Activated CD4-positive, alpha-beta T cell treated with anti-CD3 and anti-CD28 coated beads for 36 hours (primary cell): ENCODE measurements at regions of chr20 and their contacts with region 1.

Region 1: GRCh38 chr20:62861726-62862336 is at the start of gene TCFL5:
- DNase-seq: peak; percentile 97
- ATAC-seq: peak; percentile 92
- H3K4me3 Mint-ChIP-seq: peak within 1 kb of the TSS; percentile 66
- H3K27ac Mint-ChIP-seq: peak within 1 kb of the TSS; percentile 42
- H3K4me1 Mint-ChIP-seq: peaks cover 28% of the 10 kb centered on the region
- H3K27me3 Mint-ChIP-seq: no peaks in the 10 kb centered on the region
- total RNA-seq, gene TCFL5: 5.2 to 6.6 TPM

Region 2: DNA sequence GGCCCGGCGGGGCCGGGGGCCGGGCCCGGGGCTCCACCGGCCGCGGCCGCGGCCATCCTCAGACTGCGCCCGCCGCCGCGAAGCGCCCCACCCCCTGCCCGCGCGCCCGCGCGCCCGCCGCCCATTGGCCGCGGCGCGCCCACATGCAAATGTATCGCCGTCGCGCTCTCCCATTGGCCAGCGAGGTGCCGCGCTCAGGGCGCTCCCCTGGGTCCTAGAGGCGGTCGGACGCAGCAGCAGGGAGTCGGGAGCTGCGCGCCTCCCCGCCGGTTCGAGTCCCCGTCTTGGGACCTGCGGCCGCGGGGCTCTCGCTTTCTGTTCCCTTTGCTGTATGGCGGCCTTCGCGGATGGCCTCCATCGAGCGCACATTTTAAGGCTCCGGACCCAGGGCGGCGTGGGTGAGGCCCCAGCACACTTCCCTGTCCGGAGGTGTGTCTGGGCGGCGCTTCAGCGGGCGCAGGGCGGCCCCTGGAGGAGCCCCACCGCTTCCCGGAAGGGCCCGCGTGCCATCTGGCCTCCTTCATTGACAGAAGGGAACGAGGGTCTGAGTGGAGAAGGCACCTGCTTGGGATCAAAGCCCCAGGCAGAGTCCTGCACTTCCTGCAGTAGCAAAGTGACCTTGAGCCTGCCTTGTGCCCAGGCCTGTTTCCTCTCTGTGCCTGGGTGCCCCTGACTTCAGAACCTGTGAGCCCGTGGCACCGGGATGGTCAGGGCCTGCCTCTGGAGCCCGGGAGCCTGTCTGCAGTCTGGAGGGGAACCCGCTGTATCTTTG is 454.4 kb before region 1 on chr20 and contains the start of gene CABLES2:
- CTCF ChIA-PET with region 1: no interaction called
- POLR2A ChIA-PET with region 1: no interaction called
- intact Hi-C with region 1: loop called in 1 of 2 experiments (anchors 1 kb)
- DNase-seq: peak; percentile 96
- ATAC-seq: peak; percentile 93
- H3K4me3 Mint-ChIP-seq: peak within 1 kb of the TSS; percentile 72
- H3K27ac Mint-ChIP-seq: peak within 1 kb of the TSS; percentile 82
- H3K4me1 Mint-ChIP-seq: peaks cover 23% of the 10 kb centered on the region
- H3K27me3 Mint-ChIP-seq: peaks cover 2% of the 10 kb centered on the region
- total RNA-seq, gene CABLES2: 6.4 to 7.6 TPM

Region 3: DNA sequence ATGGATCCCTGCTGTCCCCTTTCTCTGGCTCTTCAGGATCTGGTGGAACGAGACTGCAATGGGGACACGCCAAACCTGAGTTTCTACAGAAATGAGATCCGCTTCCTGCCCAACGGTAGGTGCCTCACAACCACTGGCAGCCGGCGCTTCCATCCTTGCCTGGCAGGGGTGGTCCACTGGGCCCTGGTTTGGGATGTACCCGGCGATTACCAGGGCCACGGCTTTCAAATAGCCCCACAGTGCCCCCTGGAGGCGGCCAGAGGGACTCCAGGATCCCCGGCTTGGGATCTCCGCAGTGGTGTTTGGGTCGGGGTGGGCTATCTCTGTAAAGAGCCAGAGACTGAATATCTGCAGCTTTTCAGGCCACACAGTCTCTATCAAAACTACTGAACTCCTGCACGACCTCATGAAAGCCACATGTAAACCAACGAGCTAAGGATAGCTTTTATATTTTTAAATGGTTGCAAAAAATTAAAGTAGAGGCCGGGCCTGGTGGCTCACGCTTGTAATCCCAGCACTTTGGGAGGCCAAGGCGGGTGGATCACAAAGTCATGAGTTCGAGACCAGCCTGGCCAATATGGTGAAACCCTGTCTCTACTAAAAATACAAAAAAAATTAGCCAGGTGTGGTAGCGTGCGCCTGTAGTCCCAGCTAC is 53.5 kb before region 1 on chr20:
- CTCF ChIA-PET with region 1: no interaction called
- POLR2A ChIA-PET with region 1: no interaction called
- intact Hi-C with region 1: loop called in 1 of 2 experiments (anchors 2 kb)
- DNase-seq: peak; percentile 86
- ATAC-seq: peak; percentile 67
- H3K4me3 Mint-ChIP-seq: no peak overlapping the region
- H3K27ac Mint-ChIP-seq: no peak overlapping the region
- H3K4me1 Mint-ChIP-seq: peaks cover 21% of the 10 kb centered on the region
- H3K27me3 Mint-ChIP-seq: no peaks in the 10 kb centered on the region

Region 4: DNA sequence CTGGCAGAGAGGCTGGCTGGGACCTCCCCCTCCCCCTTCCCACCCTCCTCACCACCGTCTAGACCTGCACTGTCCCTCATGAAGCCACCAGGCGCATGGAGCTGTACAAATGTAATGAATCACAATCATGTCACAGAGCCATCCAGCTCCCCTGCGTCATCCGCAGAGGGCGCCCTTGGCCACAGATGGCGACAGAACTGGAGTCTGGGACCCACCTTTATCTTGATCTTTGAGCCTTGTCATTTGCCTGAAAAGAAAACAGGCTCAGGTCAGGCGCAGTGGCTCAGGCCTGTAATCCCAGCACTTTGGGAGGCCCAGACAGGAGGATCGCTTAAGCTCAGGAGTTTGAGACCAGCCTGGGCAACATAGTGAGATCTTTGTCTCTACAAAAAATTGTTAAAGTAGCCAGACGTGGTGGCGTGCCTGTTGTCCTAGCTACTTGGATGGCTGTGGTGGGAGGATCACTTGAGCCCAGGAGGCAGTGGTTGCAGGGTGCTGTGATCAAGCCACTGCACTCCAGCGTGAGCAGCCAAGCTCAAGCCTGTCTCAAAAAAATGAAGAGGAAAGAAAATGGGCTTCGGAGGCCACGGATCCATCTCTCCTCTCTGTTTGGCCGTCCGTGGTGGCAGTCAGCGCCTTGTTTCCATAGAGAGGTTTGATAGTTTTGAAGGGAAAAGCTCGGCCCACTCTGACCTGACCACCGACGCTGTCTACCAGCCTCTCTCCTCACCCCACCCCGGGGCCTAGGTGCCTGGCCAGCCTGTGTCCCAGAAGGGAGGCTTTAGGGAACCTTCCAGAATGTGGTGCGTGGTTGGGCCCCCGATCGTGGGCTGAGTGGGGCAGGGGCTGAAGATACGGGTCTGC is 38.8 kb before region 1 on chr20:
- CTCF ChIA-PET with region 1: no interaction called
- POLR2A ChIA-PET with region 1: no interaction called
- intact Hi-C with region 1: loop called in 1 of 2 experiments (anchors 2 kb)
- DNase-seq: peak; percentile 82
- ATAC-seq: peak; percentile 85
- H3K4me3 Mint-ChIP-seq: no peak overlapping the region
- H3K27ac Mint-ChIP-seq: no peak overlapping the region
- H3K4me1 Mint-ChIP-seq: no peaks in the 10 kb centered on the region
- H3K27me3 Mint-ChIP-seq: peaks cover 3% of the 10 kb centered on the region

Region 5: DNA sequence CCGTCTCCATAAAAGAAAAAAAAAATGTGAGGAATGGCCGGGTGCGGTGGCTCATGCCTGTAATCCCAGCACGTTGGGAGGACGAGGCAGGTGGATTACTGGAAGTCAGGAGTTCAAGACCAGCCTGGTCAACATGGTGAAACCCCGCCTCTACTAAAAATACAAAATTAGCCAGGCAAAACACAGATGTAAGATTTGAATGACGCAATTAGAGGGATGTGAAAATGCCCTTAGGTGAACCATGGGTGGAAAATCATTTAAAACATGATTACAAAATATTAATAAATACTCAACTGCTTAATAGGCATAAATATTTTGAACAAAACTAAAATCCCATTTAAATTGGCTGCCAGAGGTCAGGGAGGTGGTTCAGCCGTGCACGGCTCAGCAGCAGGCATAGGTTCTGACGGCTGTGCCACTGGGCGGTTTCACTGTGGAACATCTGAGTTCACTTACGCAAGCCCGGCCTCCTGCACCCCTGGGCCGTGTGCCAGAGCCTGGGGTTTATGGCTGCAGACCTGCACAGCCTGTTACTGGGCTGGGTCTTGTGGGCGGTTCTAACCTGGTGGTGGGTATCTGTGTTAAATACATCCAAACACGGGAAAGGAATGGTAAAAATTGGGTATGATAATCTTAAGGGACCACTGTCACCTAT is 23.9 kb before region 1 on chr20:
- CTCF ChIA-PET with region 1: no interaction called
- POLR2A ChIA-PET with region 1: no interaction called
- intact Hi-C with region 1: no loop called
- DNase-seq: peak; percentile 44
- ATAC-seq: no peak
- H3K4me3 Mint-ChIP-seq: no peak overlapping the region
- H3K27ac Mint-ChIP-seq: no peak overlapping the region
- H3K4me1 Mint-ChIP-seq: peaks cover under 1% of the 10 kb centered on the region
- H3K27me3 Mint-ChIP-seq: no peaks in the 10 kb centered on the region

Region 6: DNA sequence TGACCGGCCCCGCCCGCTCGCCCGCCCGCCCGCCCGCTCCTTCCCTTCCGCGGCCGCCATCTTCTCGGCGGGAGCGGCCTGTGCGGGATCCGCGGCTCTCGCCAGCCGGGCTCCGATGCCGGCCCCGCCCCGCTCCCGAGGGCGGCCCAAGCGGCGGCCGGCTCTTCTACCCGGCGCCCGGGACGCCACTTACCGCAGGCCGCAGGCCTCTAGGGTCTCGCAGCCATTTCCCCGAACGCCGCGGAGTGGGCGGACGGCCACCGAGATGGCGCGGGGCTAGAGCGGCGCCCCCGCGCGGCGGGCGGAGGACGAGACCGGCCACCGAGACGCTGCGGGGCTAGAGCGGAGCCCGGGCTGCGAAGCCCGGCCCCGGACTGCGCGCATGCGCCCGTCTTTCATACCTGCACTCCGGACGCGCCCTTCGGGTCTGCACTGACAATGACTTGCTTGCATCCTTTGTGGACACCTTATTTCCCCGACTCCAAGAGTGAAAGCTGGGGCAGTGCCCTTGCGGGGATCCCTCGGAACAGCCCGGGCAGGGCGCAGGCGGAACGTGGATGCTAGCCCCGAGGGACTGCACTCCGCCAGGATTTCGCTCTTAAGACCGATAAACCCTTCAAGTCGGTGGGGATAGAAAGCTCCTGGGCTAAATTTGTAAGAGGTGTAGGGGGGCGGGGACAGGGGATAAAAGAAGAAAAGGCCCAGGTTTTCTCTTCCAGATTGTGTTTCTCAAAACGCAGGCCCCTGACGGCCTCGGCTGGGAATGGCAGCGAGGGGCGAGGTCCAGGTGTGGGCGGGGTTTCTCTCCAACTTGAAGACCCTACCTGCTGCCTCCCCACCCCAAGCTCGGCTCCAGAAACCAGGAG is 64.6 kb after region 1 on chr20 and contains the start of gene DIDO1:
- CTCF ChIA-PET with region 1: no interaction called
- POLR2A ChIA-PET with region 1: no interaction called
- intact Hi-C with region 1: loop called (anchors 1 to 2 kb)
- DNase-seq: peak; percentile 94
- ATAC-seq: peak; percentile 78
- H3K4me3 Mint-ChIP-seq: peak within 1 kb of the TSS; percentile 94
- H3K27ac Mint-ChIP-seq: peak within 1 kb of the TSS; percentile 96
- H3K4me1 Mint-ChIP-seq: peaks cover 64% of the 10 kb centered on the region
- H3K27me3 Mint-ChIP-seq: no peaks in the 10 kb centered on the region
- total RNA-seq, gene DIDO1: 43.7 to 49.7 TPM

Region 7: DNA sequence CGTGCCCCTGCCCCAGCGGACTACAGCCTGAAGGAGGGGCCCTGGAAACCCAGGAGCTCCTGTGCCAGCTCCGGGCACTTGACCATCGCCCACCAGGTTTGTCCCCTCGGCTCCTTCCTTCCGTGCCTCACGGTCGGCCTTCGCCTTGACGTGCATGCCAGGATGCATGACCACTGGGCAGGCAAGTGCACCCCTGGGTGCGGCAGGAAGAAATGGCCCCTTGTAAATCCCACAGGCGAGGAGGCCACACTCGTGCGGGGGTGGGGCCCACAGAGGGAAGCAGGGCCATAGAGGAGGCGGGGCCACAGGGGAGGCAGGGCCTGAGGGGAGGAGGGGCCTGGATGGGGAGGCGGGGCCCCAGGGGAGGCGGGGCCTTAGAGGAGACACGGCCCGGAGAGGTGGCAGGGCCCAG is 272.4 kb after region 1 on chr20:
- CTCF ChIA-PET with region 1: no interaction called
- POLR2A ChIA-PET with region 1: no interaction called
- intact Hi-C with region 1: loop called in 1 of 2 experiments (anchors 2 kb)
- DNase-seq: peak; percentile 50
- ATAC-seq: peak; percentile 18
- H3K4me3 Mint-ChIP-seq: no peak overlapping the region
- H3K27ac Mint-ChIP-seq: no peak overlapping the region
- H3K4me1 Mint-ChIP-seq: no peaks in the 10 kb centered on the region
- H3K27me3 Mint-ChIP-seq: peaks cover 12% of the 10 kb centered on the region

Region 8: DNA sequence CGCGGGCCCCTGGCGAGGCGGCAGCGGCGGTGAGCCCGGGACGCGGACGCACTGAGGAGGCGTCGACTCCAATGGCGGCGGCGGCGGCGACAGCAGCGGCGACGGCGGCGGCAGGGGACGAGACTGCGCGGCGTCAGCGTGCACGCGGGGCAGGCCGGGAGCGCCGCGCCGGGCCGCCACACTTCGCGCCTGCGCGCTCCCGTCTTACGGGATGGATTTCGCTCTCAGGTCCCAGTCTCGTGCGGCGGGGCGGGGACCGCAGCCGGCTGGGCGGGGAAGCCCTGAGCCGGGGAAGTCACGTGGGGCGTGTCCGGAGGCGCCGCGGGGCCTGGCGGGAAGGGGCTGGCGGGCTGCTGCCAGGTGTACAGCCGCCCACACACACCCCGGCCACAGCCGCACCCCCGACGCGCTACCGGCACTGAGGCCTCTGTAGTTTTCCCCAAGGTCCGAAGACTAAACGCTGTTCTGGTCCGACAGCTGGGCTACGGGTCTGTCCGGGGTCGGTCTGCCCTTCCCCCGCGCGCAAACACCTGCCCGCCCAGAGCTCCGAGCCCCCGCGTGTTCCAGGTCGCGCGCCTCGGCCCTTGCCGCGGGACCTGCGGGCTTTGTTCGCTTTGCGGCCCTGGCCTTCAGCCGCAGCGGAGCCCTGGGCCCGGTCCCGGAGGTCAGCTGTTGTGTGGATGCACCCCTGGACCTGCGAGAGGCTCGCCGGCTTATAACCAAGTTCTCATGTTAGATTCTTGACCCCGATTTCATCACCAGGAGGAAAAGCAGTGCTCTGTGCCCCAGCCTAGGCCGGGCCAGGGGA is 354.4 kb after region 1 on chr20 and contains the start of gene YTHDF1:
- CTCF ChIA-PET with region 1: no interaction called
- POLR2A ChIA-PET with region 1: no interaction called
- intact Hi-C with region 1: loop called in 1 of 2 experiments (anchors 5 kb)
- DNase-seq: peak; percentile 98
- ATAC-seq: peak; percentile 98
- H3K4me3 Mint-ChIP-seq: peak within 1 kb of the TSS; percentile 92
- H3K27ac Mint-ChIP-seq: peak within 1 kb of the TSS; percentile 88
- H3K4me1 Mint-ChIP-seq: peaks cover 43% of the 10 kb centered on the region
- H3K27me3 Mint-ChIP-seq: peaks cover 4% of the 10 kb centered on the region
- total RNA-seq, gene YTHDF1: 32.2 to 32.6 TPM